Natural killer cell (primary cell): ENCODE measurements at regions of chr1 and their contacts with region 1.

Region 1: GRCh38 chr1:180154325-180155181 is at the start of gene QSOX1:
- DNase-seq: peak; percentile 83 to 95
- ATAC-seq: peak; percentile 93 to 97 (median 93)
- H3K4me3 ChIP-seq: peak within 1 kb of the TSS; percentile 73
- H3K4me3 Mint-ChIP-seq: peak within 1 kb of the TSS; percentile 88
- H3K27ac ChIP-seq: peak within 1 kb of the TSS; percentile 49
- H3K27ac Mint-ChIP-seq: peak within 1 kb of the TSS; percentile 68 to 96
- H3K4me1 ChIP-seq: peaks cover 20% of the 10 kb centered on the region
- H3K4me1 Mint-ChIP-seq: peaks cover 33 to 38% of the 10 kb centered on the region in 2 donors
- H3K27me3 ChIP-seq: no peaks in the 10 kb centered on the region
- H3K27me3 Mint-ChIP-seq: no peaks in the 10 kb centered on the region
- CTCF ChIP-seq: no peak
- total RNA-seq, gene QSOX1: 31.0 to 42.7 (median 38.2) TPM

Region 2: GRCh38 chr1:179954493-179955297 is 199.9 kb before region 1 on chr1 and contains the start of gene CEP350:
- intact Hi-C with region 1: loop called (anchors 10 kb)
- DNase-seq: peak; percentile 95 to 100
- ATAC-seq: peak; percentile 87 to 97 (median 90)
- H3K4me3 ChIP-seq: peak within 1 kb of the TSS; percentile 69
- H3K4me3 Mint-ChIP-seq: peak within 1 kb of the TSS; percentile 93
- H3K27ac ChIP-seq: peak within 1 kb of the TSS; percentile 80
- H3K27ac Mint-ChIP-seq: peak within 1 kb of the TSS; percentile 95 to 96
- H3K4me1 ChIP-seq: peaks cover 18% of the 10 kb centered on the region
- H3K4me1 Mint-ChIP-seq: peaks cover 52 to 53% of the 10 kb centered on the region in 2 donors
- H3K27me3 ChIP-seq: no peaks in the 10 kb centered on the region
- H3K27me3 Mint-ChIP-seq: no peaks in the 10 kb centered on the region
- CTCF ChIP-seq: no peak
- total RNA-seq, gene CEP350: 66.9 to 83.7 (median 75.3) TPM

Region 3: GRCh38 chr1:180092931-180093559 is 61.5 kb before region 1 on chr1:
- intact Hi-C with region 1: no loop called
- DNase-seq: no peak
- ATAC-seq: no peak
- H3K4me3 ChIP-seq: no peak overlapping the region
- H3K4me3 Mint-ChIP-seq: no peak overlapping the region
- H3K27ac ChIP-seq: no peak overlapping the region
- H3K27ac Mint-ChIP-seq: peak overlapping the region; percentile 15 to 24
- H3K4me1 ChIP-seq: no peaks in the 10 kb centered on the region
- H3K4me1 Mint-ChIP-seq: no peaks in the 10 kb centered on the region
- H3K27me3 ChIP-seq: no peaks in the 10 kb centered on the region
- H3K27me3 Mint-ChIP-seq: no peaks in the 10 kb centered on the region
- CTCF ChIP-seq: no peak

Region 4: DNA sequence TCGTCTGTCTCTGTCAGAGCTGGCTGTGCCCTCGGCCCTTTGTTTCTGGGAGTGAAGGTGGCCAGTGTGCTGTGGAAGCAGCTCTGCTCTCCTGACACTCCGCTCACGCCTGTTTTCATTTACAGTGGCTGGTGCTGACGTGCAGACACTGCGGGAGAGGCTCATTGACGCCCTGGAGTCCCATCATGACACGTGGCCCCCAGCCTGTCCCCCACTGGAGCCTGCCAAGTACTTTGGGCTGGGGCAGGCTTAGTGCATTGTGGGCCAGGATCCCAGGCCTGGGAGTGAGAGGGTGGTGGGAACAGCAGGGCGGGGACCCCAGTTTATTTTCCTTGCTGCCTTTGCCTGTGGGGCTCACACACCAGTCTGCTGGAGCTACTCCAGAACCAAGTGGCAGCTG is 21.3 kb after region 1 on chr1:
- intact Hi-C with region 1: no loop called
- DNase-seq: no peak
- ATAC-seq: no peak
- H3K4me3 ChIP-seq: no peak overlapping the region
- H3K4me3 Mint-ChIP-seq: no peak overlapping the region
- H3K27ac ChIP-seq: no peak overlapping the region
- H3K27ac Mint-ChIP-seq: no peak overlapping the region
- H3K4me1 ChIP-seq: no peaks in the 10 kb centered on the region
- H3K4me1 Mint-ChIP-seq: peaks cover 0 to 4% of the 10 kb centered on the region in 2 donors
- H3K27me3 ChIP-seq: no peaks in the 10 kb centered on the region
- H3K27me3 Mint-ChIP-seq: no peaks in the 10 kb centered on the region
- CTCF ChIP-seq: no peak

Region 5: GRCh38 chr1:180188091-180188506 is 33.5 kb after region 1 on chr1:
- intact Hi-C with region 1: loop called (anchors 2 kb)
- DNase-seq: peak in 1 of 2 donors; percentile 13
- ATAC-seq: no peak
- H3K4me3 ChIP-seq: no peak overlapping the region
- H3K4me3 Mint-ChIP-seq: no peak overlapping the region
- H3K27ac ChIP-seq: no peak overlapping the region
- H3K27ac Mint-ChIP-seq: no peak overlapping the region
- H3K4me1 ChIP-seq: peaks cover 47% of the 10 kb centered on the region
- H3K4me1 Mint-ChIP-seq: peaks cover 43 to 48% of the 10 kb centered on the region in 2 donors
- H3K27me3 ChIP-seq: no peaks in the 10 kb centered on the region
- H3K27me3 Mint-ChIP-seq: peaks cover 7 to 9% of the 10 kb centered on the region in 2 donors
- CTCF ChIP-seq: peak; percentile 33